ENCODE measurements at regions of chr2 and their contacts with region 1.

Region 1: GRCh38 chr2:236034974-236035373 is 133.2 kb downstream of the GBX2 start:
- DNase-seq: no peak
- H3K4me3 ChIP-seq: no peak overlapping the region
- H3K27ac ChIP-seq: no peak overlapping the region
- H3K4me1 ChIP-seq: no peaks in the 10 kb centered on the region
- H3K27me3 ChIP-seq: no peaks in the 10 kb centered on the region
- CTCF ChIP-seq: no peak

Region 2: DNA sequence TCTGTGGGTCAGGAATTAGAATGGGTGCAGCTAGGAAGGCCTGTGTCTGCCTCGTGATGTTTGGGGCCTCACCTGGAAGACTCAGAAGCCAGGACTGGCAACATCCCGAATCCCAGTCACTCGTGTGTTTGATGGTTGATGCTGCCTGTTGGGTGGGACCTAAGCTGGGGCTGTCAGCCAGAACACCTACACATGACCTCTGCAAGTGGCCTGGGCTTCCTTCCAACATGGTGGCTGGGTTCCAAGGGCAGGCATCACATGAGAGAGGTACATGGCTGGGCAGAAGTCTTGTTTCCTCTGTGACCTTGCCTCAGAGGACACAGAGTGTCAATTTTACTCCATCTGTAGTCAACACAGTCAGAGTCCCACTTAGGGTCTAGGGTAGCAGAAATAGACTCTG is 44.6 kb before region 1 on chr2:
- CTCF ChIA-PET with region 1: no interaction called
- dilution Hi-C with region 1: loop called (anchors 5 kb)
- in situ Hi-C with region 1: no loop called
- intact Hi-C with region 1: no loop called
- DNase-seq: no peak
- H3K4me3 ChIP-seq: no peak overlapping the region
- H3K27ac ChIP-seq: no peak overlapping the region
- H3K4me1 ChIP-seq: no peaks in the 10 kb centered on the region
- H3K27me3 ChIP-seq: no peaks in the 10 kb centered on the region
- CTCF ChIP-seq: no peak

Region 3: GRCh38 chr2:236045251-236046235 is 10.6 kb after region 1 on chr2:
- CTCF ChIA-PET with region 1: no interaction called
- dilution Hi-C with region 1: no loop called
- in situ Hi-C with region 1: no loop called
- intact Hi-C with region 1: no loop called
- DNase-seq: peak; percentile 32
- H3K4me3 ChIP-seq: no peak overlapping the region
- H3K27ac ChIP-seq: no peak overlapping the region
- H3K4me1 ChIP-seq: peaks cover 16% of the 10 kb centered on the region
- H3K27me3 ChIP-seq: no peaks in the 10 kb centered on the region
- CTCF ChIP-seq: no peak

Region 4: GRCh38 chr2:236073246-236073645 is 38.3 kb after region 1 on chr2:
- CTCF ChIA-PET with region 1: no interaction called
- dilution Hi-C with region 1: loop called (anchors 5 kb)
- in situ Hi-C with region 1: no loop called
- intact Hi-C with region 1: no loop called
- DNase-seq: no peak
- H3K4me3 ChIP-seq: no peak overlapping the region
- H3K27ac ChIP-seq: no peak overlapping the region
- H3K4me1 ChIP-seq: no peaks in the 10 kb centered on the region
- H3K27me3 ChIP-seq: no peaks in the 10 kb centered on the region
- CTCF ChIP-seq: no peak